ENCODE measurements at regions of chr16 and their contacts with region 1.

Region 1: DNA sequence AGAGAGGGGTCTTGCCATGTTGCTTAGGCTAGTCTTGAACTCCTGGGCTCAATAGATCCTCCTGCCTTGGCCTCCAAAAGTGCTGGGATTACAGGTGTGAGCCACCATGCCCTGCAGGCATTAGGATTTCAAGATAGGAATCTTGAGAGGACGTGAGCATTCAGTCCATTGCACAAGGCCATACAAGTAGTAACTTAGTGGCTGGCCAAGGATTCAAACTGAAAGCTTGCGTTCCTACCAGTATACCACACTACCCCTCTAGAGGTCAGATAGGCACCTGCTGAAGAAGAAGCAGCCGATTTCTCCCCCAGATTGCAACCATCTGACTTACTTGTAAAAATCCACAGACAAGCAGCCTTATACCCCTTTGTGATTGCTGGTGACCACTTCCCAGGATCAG is 80.9 kb downstream of the CACNG3 start:
- DNase-seq: no peak
- ATAC-seq: no peak
- H3K4me3 ChIP-seq: no peak overlapping the region
- H3K27ac ChIP-seq: no peak overlapping the region
- H3K4me1 ChIP-seq: no peaks in the 10 kb centered on the region
- H3K27me3 ChIP-seq: no peaks in the 10 kb centered on the region

Region 2: DNA sequence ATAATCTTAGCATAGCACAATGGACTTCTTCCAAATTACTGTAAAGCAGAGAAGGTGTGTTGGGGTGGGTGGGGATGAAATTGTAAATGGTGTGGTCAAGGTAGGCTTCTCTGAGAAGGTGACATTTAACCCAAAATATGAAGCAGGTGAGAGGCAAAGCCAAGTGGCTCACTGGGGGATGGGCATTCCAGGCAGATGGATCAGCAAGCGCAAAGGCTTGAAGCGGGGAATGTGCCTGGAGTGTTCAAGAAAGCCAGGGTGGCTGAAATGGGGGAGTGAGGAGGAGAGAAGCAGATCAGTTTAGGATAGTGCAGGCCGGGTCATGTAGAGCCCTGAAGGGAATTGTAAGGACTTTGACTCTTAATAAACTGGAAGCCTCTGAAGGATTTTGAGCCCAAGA is 66.3 kb before region 1 on chr16:
- intact Hi-C with region 1: no loop called
- DNase-seq: no peak
- ATAC-seq: no peak
- H3K4me3 ChIP-seq: no peak overlapping the region
- H3K27ac ChIP-seq: no peak overlapping the region
- H3K4me1 ChIP-seq: no peaks in the 10 kb centered on the region
- H3K27me3 ChIP-seq: no peaks in the 10 kb centered on the region

Region 3: DNA sequence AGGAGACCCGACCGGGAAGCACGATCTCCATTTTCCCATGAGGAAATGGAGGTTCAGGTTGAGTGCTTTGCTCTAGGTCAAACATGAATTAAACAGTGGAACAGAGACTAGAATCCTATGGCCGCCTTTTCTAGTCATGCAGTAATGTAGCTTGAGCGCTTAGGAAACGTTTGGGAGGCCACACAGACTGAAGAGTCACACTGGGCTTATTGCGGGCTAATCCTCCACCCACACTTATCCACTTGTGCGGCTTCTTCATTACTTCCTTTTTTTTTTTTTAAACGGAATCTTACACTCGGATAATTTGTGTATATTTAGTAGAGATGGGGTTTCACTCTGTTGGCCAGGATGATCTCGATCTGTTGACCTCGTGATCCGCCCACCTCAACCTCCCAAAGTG is 54.9 kb before region 1 on chr16:
- intact Hi-C with region 1: loop called in 1 of 2 experiments (anchors 10 kb)
- DNase-seq: no peak
- ATAC-seq: no peak
- H3K4me3 ChIP-seq: no peak overlapping the region
- H3K27ac ChIP-seq: no peak overlapping the region
- H3K4me1 ChIP-seq: no peaks in the 10 kb centered on the region
- H3K27me3 ChIP-seq: no peaks in the 10 kb centered on the region

Region 4: DNA sequence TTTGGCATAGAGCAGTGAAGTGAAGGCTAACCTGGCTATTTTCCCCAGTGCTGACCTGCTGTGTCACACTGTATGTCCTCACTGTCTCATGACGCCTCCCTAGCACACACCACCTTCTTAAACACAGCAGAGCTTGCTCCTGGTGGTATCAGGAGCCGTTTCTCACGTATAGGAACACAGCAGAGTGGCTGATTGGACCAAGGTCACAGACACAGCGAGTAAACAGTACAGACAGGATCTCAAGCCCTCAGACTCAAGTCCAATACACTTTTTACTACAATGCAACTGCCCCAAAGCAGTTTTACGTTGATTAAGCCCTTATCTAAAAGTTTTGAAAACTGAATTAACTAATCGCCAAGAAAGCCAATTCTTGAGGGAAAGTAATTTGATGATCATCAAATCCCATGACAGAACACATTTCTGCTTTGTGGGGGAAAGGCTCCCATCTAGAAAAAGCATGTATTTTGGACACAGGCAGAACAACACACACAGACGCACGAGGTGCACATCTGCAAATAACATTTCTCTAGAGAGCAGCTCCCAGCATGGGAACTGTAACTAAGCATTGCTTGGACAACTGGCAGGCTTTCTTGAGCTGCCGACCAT is 663.0 kb after region 1 on chr16:
- intact Hi-C with region 1: no loop called
- DNase-seq: no peak
- ATAC-seq: no peak
- H3K4me3 ChIP-seq: no peak overlapping the region
- H3K27ac ChIP-seq: peak overlapping the region in 1 of 2 donors; percentile 55
- H3K4me1 ChIP-seq: no peaks in the 10 kb centered on the region
- H3K27me3 ChIP-seq: no peaks in the 10 kb centered on the region

Measured in aorta (tissue), 5 donors.